Activated T-helper 1 cell treated with anti-CD3 and anti-CD28 coated beads, Interleukin-12 subunit alpha, Interleukin-12 subunit beta, Interleukin-2, Interleukin-4 antibody, amounts not matched to agents 30 ng/mL and 10 ng/mL and 1 ng/mL, durations not matched to agents 14 hours and 24 hours and 36 hours (primary cell): ENCODE measurements at regions of chr10 and their contacts with region 1.

Region 1: DNA sequence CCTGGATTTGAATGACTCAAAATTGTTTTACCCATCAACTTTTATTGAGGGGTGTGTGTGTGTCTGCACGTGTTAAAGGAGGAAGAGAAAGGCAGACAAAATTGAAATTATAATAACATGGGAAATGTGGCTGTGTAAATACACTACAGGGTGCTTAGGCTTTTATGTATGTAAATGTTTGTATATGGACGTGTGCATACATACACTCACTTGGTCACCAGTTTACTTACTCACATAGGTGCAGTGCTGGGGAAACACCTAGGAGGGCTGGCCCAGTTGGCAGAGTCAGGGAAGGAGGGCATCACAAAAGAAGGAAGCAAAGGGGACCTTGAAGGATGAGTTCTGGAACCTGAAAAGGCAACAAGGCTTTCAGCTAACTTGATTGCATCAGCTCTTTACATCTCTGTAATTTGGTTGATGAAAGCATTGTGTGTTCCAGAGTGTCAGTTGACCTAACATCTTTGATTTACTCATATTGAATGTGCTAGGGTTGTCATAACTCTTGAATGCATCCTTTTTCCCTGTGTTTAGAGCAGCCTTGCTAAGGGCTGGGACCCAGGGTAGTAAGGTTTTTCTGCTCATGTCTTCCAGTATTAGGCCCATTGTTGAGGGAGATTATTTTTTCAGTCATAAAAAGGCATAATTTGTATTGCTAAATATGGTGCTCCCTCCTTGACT is 10.2 kb downstream of the WDR11 start:
- DNase-seq: no peak
- H3K4me3 Mint-ChIP-seq: no peak overlapping the region
- H3K27ac Mint-ChIP-seq: no peak overlapping the region
- H3K4me1 Mint-ChIP-seq: peaks cover 7% of the 10 kb centered on the region
- H3K27me3 Mint-ChIP-seq: no peaks in the 10 kb centered on the region

Region 2: DNA sequence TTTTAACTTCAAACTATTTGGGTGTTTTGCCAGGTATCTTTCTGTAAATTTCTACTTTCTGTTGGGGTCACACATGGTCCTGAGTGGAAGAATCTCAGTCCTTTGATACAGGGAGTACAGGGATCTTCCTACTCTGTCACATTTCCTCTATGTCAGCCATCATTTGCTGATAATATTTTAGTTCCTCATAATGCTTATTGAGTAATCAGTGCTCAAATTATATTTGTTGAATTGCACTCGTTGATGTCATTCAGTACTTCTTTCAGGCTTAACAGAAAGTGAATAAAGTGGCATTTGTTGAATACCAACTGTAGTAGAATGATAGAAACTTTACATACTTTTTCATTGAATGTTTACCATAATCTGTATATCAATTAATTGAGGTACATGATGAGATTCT is 21.8 kb after region 1 on chr10:
- intact Hi-C with region 1: loop called (anchors 1 kb)
- DNase-seq: no peak
- H3K4me3 Mint-ChIP-seq: no peak overlapping the region
- H3K27ac Mint-ChIP-seq: no peak overlapping the region
- H3K4me1 Mint-ChIP-seq: no peaks in the 10 kb centered on the region
- H3K27me3 Mint-ChIP-seq: no peaks in the 10 kb centered on the region